Activated CD8-positive, alpha-beta T cell treated with anti-CD3 and anti-CD28 coated beads, Interleukin-2, amount 10 ng/mL, durations not matched to agents 7 days and 5 days (primary cell): ENCODE measurements at regions of chr5 and their contacts with region 1.

Region 1: GRCh38 chr5:123423278-123424149 is at the start of gene CEP120:
- DNase-seq: peak; percentile 99
- ATAC-seq: peak; percentile 98
- H3K4me3 Mint-ChIP-seq: no peak within 1 kb of the TSS
- H3K27ac Mint-ChIP-seq: no peak within 1 kb of the TSS
- H3K4me1 Mint-ChIP-seq: peaks cover 23% of the 10 kb centered on the region
- H3K27me3 Mint-ChIP-seq: no peaks in the 10 kb centered on the region
- total RNA-seq, gene CEP120: 22.3 to 27.6 TPM

Region 2: GRCh38 chr5:122639864-122640263 is 783.6 kb before region 1 on chr5:
- CTCF ChIA-PET with region 1: no interaction called
- POLR2A ChIA-PET with region 1: no interaction called
- DNase-seq: no peak
- ATAC-seq: no peak
- H3K4me3 Mint-ChIP-seq: no peak overlapping the region
- H3K27ac Mint-ChIP-seq: no peak overlapping the region
- H3K4me1 Mint-ChIP-seq: no peaks in the 10 kb centered on the region
- H3K27me3 Mint-ChIP-seq: no peaks in the 10 kb centered on the region

Region 3: GRCh38 chr5:123303802-123304201 is 119.7 kb before region 1 on chr5:
- CTCF ChIA-PET with region 1: no interaction called
- POLR2A ChIA-PET with region 1: no interaction called
- DNase-seq: no peak
- ATAC-seq: no peak
- H3K4me3 Mint-ChIP-seq: no peak overlapping the region
- H3K27ac Mint-ChIP-seq: no peak overlapping the region
- H3K4me1 Mint-ChIP-seq: no peaks in the 10 kb centered on the region
- H3K27me3 Mint-ChIP-seq: peaks cover 2% of the 10 kb centered on the region

Region 4: DNA sequence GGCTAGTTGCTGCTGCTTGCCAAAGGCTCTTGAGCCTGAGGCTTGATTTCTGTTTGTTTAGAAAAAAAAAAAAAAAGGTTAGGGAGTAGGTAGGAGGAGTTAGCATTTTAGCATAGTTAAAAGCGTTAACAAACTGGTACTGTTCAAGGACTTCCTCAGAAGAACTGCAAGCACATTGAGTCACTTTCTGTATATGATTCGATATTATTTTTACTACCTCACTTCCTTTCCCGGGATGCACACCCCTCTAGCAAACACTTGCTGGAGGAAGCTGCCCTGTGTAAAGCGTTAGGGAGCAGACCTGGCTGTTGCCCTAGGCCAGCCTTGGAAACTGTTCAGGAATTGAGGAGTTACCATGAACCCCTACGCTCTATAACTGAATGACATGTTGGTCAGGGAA is 15.4 kb after region 1 on chr5:
- CTCF ChIA-PET with region 1: interaction called, 21 read pairs
- POLR2A ChIA-PET with region 1: interaction called, 21 read pairs
- DNase-seq: no peak
- ATAC-seq: no peak
- H3K4me3 Mint-ChIP-seq: no peak overlapping the region
- H3K27ac Mint-ChIP-seq: no peak overlapping the region
- H3K4me1 Mint-ChIP-seq: peaks cover 2% of the 10 kb centered on the region
- H3K27me3 Mint-ChIP-seq: peaks cover 2% of the 10 kb centered on the region

Region 5: GRCh38 chr5:123511648-123512605 is 88.4 kb after region 1 on chr5 and contains the start of gene CSNK1G3:
- CTCF ChIA-PET with region 1: interaction called, 50 read pairs
- POLR2A ChIA-PET with region 1: interaction called, 83 read pairs
- DNase-seq: peak; percentile 96
- ATAC-seq: peak; percentile 93
- H3K4me3 Mint-ChIP-seq: peak within 1 kb of the TSS; percentile 97
- H3K27ac Mint-ChIP-seq: peak within 1 kb of the TSS; percentile 99
- H3K4me1 Mint-ChIP-seq: peaks cover 46% of the 10 kb centered on the region
- H3K27me3 Mint-ChIP-seq: peaks cover 14% of the 10 kb centered on the region
- total RNA-seq, gene CSNK1G3: 26.9 to 28.6 TPM

Region 6: DNA sequence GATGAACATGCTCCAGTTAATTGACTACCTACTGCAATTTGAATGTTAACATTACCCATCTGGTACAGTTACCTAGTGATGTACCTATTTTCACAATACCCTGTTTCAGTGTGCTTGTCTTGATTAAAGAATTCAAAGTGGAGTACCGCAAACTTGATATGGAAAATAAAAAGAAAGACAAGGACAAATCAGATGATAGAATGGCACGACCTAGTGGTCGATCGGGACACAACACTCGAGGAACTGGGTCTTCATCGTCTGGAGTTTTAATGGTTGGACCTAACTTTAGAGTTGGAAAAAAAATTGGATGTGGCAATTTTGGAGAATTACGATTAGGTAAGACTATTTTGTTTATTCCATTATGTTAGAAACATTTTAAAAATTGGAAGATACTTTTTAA is 122.0 kb after region 1 on chr5:
- CTCF ChIA-PET with region 1: interaction called, 27 read pairs
- POLR2A ChIA-PET with region 1: interaction called, 29 read pairs
- DNase-seq: peak; percentile 30
- ATAC-seq: no peak
- H3K4me3 Mint-ChIP-seq: no peak overlapping the region
- H3K27ac Mint-ChIP-seq: no peak overlapping the region
- H3K4me1 Mint-ChIP-seq: peaks cover 41% of the 10 kb centered on the region
- H3K27me3 Mint-ChIP-seq: no peaks in the 10 kb centered on the region